ENCODE measurements at regions of chr5 and their contacts with region 1.

Region 1: DNA sequence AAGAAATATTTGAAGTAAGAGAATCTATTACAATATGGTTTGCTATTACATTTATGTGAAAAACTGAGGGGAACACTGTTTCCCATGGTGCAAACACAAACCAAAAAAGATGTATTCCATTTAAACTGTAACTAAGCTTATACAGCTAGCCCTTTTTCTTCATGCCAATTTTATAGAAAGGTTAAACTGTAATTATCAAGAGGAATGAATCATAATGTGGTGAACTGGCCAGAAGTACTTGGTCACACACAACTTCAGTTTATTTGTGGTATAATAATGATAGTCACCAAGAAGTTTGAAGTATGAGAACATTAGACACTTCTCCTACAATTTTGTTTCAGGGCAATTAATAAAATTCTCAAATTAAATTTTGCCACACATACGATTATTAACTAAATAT is 177.9 kb downstream of the XRCC4 start:
- DNase-seq: peak; percentile 57
- ATAC-seq: peak; percentile 37
- H3K4me3 ChIP-seq: no peak overlapping the region
- H3K27ac ChIP-seq: no peak overlapping the region
- H3K4me1 ChIP-seq: no peaks in the 10 kb centered on the region
- H3K27me3 ChIP-seq: no peaks in the 10 kb centered on the region
- CTCF ChIP-seq: no peak
- POLR2A ChIP-seq: no peak
- RAD21 ChIP-seq: no peak

Region 2: GRCh38 chr5:84119252-84119651 is 864.0 kb after region 1 on chr5:
- CTCF ChIA-PET with region 1: no interaction called
- POLR2A ChIA-PET with region 1: interaction called, 31 read pairs
- dilution Hi-C with region 1: no loop called
- in situ Hi-C with region 1: no loop called
- intact Hi-C with region 1: no loop called
- DNase-seq: no peak
- ATAC-seq: no peak
- H3K4me3 ChIP-seq: no peak overlapping the region
- H3K27ac ChIP-seq: no peak overlapping the region
- H3K4me1 ChIP-seq: peaks cover 1% of the 10 kb centered on the region; the same call in 1 of the 2 replicates
- H3K27me3 ChIP-seq: no peaks in the 10 kb centered on the region
- CTCF ChIP-seq: no peak
- POLR2A ChIP-seq: no peak
- RAD21 ChIP-seq: no peak

Measured in IMR-90 (cell line).